Activated CD4-positive, alpha-beta T cell treated with anti-CD3 and anti-CD28 coated beads for 36 hours (primary cell): ENCODE measurements at regions of chr2 and their contacts with region 1.

Region 1: DNA sequence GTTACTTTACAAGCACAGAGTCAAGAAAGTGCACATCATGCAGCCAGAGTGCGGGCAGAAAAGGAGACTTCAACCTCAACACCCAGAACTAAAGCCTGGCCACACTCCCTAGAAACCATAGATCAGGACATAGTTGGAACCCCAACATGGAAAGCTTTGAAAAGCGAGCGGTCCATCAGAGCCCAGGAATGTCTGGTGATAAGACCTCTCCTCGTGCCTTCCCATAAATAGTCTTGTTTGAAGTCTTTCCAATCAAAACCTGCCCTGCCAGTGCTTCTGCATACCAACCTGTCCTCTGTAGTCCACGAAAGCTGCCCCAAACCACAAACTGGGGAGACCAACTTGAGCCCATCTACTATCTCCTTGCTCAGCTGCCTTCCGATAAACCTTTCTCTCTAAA is 55.5 kb downstream of the NEURL3 start:
- DNase-seq: no peak
- ATAC-seq: no peak
- H3K4me3 Mint-ChIP-seq: no peak overlapping the region
- H3K27ac Mint-ChIP-seq: no peak overlapping the region
- H3K4me1 Mint-ChIP-seq: no peaks in the 10 kb centered on the region
- H3K27me3 Mint-ChIP-seq: no peaks in the 10 kb centered on the region

Region 2: DNA sequence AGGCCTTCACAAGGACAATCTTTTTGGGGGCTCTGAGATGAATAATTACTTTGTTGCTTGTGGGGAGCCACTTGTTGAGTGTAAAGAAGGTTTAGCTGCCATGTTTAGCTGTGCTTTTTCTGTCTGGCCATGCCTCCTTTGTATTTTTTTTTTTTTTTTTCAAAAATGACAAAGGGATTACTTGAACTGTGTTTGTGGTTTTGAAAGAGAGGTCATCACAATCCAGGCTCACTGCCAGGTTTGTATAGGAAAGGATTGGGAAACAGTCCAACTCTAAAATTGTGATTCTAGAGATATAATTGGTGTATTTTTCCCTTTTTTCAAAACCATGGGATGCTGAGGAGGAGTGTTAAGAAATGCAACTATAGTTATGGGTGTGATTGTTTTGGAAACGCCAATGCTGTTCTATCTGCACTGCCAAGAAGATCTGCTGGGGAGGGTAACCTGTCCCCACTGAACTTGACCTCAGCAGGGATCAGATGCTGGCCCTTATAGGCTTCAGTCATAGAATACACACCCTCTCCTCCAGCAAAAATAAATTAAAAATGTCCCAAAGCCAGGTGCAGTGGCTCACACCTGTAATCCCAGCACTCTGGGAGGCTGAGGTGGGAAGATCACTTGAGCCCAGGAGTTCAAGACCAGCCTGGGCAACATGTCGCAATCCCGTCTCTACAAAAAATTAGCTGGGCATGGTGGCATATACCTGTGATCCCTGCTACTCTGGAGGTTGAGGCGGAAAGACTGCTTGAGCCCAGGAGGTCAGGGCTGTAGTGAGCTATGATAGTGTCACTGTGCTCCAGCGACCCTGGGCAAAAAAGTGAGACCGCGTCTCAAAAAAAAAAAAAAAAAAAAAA is 120.0 kb before region 1 on chr2:
- CTCF ChIA-PET with region 1: no interaction called
- POLR2A ChIA-PET with region 1: no interaction called
- intact Hi-C with region 1: no loop called
- DNase-seq: no peak
- ATAC-seq: no peak
- H3K4me3 Mint-ChIP-seq: no peak overlapping the region
- H3K27ac Mint-ChIP-seq: no peak overlapping the region
- H3K4me1 Mint-ChIP-seq: peaks cover 33% of the 10 kb centered on the region
- H3K27me3 Mint-ChIP-seq: no peaks in the 10 kb centered on the region

Region 3: DNA sequence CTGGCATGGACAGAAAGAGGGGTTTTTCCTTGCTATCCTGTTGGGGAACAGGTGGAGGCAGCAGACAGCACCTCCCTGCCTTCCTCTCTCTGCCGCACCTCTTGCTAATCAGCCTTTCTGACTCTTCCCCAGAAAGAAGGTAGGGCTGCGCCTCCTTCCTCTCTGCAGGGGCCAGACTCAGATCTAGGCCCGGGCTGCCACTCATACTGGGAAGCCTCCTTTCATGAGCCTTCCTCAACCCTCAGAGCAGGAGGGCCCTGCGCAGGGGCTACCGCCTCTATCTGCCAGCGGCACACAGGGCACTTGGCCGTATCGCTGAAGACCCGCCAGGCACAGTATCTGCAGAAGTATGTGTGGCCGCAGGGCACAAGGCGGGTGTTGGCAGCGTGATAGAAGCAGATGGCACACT is 48.4 kb after region 1 on chr2:
- CTCF ChIA-PET with region 1: no interaction called
- POLR2A ChIA-PET with region 1: no interaction called
- intact Hi-C with region 1: loop called in 1 of 2 experiments (anchors 5 kb)
- DNase-seq: no peak
- ATAC-seq: no peak
- H3K4me3 Mint-ChIP-seq: no peak overlapping the region
- H3K27ac Mint-ChIP-seq: no peak overlapping the region
- H3K4me1 Mint-ChIP-seq: peaks cover 22% of the 10 kb centered on the region
- H3K27me3 Mint-ChIP-seq: no peaks in the 10 kb centered on the region